GM12878 (cell line): ENCODE measurements at regions of chr12 and their contacts with region 1.

Region 1: GRCh38 chr12:1117970-1118563 is 127.0 kb downstream of the ERC1 start:
- DNase-seq: no peak
- ATAC-seq: peak; percentile 73
- H3K4me3 ChIP-seq: no peak overlapping the region
- H3K27ac ChIP-seq: no peak overlapping the region
- H3K4me1 ChIP-seq: peaks cover 4% of the 10 kb centered on the region; the same call in 1 of the 2 replicates
- H3K27me3 ChIP-seq: no peaks in the 10 kb centered on the region
- CTCF ChIP-seq: peak; percentile 80 to 87 (median 83)
- EP300 ChIP-seq: no peak
- POLR2A ChIP-seq: no peak
- RAD21 ChIP-seq: peak; percentile 97

Region 2: GRCh38 chr12:569803-570434 is 548.1 kb before region 1 on chr12:
- CTCF ChIA-PET with region 1: interaction called, 10 read pairs
- POLR2A ChIA-PET with region 1: no interaction called
- RAD21 ChIA-PET with region 1: interaction called, 3 read pairs
- SMC1A ChIA-PET with region 1: no interaction called
- in situ Hi-C with region 1: no loop called
- intact Hi-C with region 1: no loop called
- DNase-seq: no peak
- ATAC-seq: peak; percentile 97
- H3K4me3 ChIP-seq: peak overlapping the region; percentile 64
- H3K27ac ChIP-seq: no peak overlapping the region
- H3K4me1 ChIP-seq: no peaks in the 10 kb centered on the region
- H3K27me3 ChIP-seq: no peaks in the 10 kb centered on the region
- CTCF ChIP-seq: peak; percentile 91 to 94 (median 92)
- EP300 ChIP-seq: no peak
- POLR2A ChIP-seq: no peak
- RAD21 ChIP-seq: peak; percentile 92

Region 3: DNA sequence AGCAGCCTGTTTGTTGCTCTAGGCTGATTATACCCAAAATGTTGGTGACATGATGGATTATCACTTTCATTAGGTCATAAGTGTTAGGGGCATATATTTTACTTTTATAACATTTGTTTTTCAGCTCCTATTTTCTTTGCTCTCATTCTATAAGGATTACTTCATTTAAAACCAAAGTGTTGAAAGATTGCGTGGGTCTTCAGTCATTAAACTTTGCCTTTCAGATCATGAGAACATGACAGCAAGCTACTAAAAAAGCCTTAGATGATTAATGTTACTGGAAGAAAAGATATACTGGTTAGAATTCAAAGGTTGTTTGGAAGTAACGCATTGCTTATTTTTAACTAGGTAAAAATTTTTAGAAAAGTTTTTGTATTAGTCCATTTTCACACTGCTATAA is 29.8 kb after region 1 on chr12:
- CTCF ChIA-PET with region 1: interaction called, 15 read pairs
- POLR2A ChIA-PET with region 1: no interaction called
- RAD21 ChIA-PET with region 1: interaction called, 6 read pairs
- SMC1A ChIA-PET with region 1: interaction called, 15 read pairs
- in situ Hi-C with region 1: no loop called
- intact Hi-C with region 1: no loop called
- DNase-seq: no peak
- ATAC-seq: no peak
- H3K4me3 ChIP-seq: no peak overlapping the region
- H3K27ac ChIP-seq: no peak overlapping the region
- H3K4me1 ChIP-seq: no peaks in the 10 kb centered on the region
- H3K27me3 ChIP-seq: no peaks in the 10 kb centered on the region
- CTCF ChIP-seq: no peak
- EP300 ChIP-seq: no peak
- POLR2A ChIP-seq: no peak
- RAD21 ChIP-seq: no peak

Region 4: GRCh38 chr12:1250641-1251040 is 132.6 kb after region 1 on chr12:
- CTCF ChIA-PET with region 1: interaction called, 12 read pairs
- POLR2A ChIA-PET with region 1: no interaction called
- RAD21 ChIA-PET with region 1: interaction called, 8 read pairs
- SMC1A ChIA-PET with region 1: interaction called, 4 read pairs
- in situ Hi-C with region 1: no loop called
- intact Hi-C with region 1: no loop called
- DNase-seq: no peak
- ATAC-seq: no peak
- H3K4me3 ChIP-seq: no peak overlapping the region
- H3K27ac ChIP-seq: no peak overlapping the region
- H3K4me1 ChIP-seq: no peaks in the 10 kb centered on the region
- H3K27me3 ChIP-seq: no peaks in the 10 kb centered on the region
- CTCF ChIP-seq: no peak
- EP300 ChIP-seq: no peak
- POLR2A ChIP-seq: no peak
- RAD21 ChIP-seq: no peak

Region 5: DNA sequence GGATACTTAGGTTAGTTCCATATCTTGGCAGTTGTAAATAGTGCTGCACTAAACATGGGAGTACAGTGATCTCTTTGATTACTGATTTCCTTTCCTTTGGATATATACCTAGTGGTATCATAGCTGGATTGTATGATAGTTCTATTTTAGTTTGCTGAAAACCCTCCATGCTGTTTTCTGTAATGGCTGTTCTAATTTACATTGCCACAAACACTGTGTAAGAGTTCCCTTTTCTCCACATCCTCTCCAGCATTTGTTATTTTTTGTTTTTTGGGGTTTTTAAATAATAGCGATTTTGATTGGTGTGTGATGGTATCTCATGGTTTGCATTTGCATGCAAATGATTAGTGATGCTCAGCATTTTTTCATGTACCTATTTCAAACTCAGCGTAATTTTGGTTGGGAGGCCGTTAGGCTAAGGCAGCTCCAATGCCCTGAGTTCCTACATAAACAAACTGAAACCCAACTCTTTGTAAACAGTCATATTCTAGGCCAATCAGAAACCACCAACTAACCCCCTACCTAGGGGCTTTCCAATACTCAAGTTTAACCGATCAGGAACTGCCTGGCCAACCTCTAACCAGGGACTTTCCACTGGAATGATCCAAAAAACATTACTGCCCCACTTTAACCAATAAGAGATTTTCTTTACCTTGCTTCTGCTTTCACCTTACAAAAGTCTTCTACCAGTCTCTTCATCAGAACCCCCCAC is 304.7 kb after region 1 on chr12:
- CTCF ChIA-PET with region 1: interaction called, 5 read pairs
- POLR2A ChIA-PET with region 1: no interaction called
- RAD21 ChIA-PET with region 1: interaction called, 4 read pairs
- SMC1A ChIA-PET with region 1: interaction called, 10 read pairs
- in situ Hi-C with region 1: no loop called
- intact Hi-C with region 1: no loop called
- DNase-seq: peak; percentile 83
- ATAC-seq: peak; percentile 98
- H3K4me3 ChIP-seq: no peak overlapping the region
- H3K27ac ChIP-seq: peak overlapping the region; percentile 75
- H3K4me1 ChIP-seq: no peaks in the 10 kb centered on the region
- H3K27me3 ChIP-seq: no peaks in the 10 kb centered on the region
- CTCF ChIP-seq: no peak
- EP300 ChIP-seq: peak; percentile 46 to 57; a peak in 3 of 4 replicates
- POLR2A ChIP-seq: no peak
- RAD21 ChIP-seq: no peak

Region 6: GRCh38 chr12:1544996-1545700 is 427.1 kb after region 1 on chr12:
- CTCF ChIA-PET with region 1: interaction called, 14 read pairs
- POLR2A ChIA-PET with region 1: no interaction called
- RAD21 ChIA-PET with region 1: no interaction called
- SMC1A ChIA-PET with region 1: interaction called, 4 read pairs
- in situ Hi-C with region 1: no loop called
- intact Hi-C with region 1: no loop called
- DNase-seq: no peak
- ATAC-seq: no peak
- H3K4me3 ChIP-seq: no peak overlapping the region
- H3K27ac ChIP-seq: no peak overlapping the region
- H3K4me1 ChIP-seq: peaks cover 15% of the 10 kb centered on the region; the same call in 1 of the 2 replicates
- H3K27me3 ChIP-seq: no peaks in the 10 kb centered on the region
- CTCF ChIP-seq: peak in 1 of 3 experiments; percentile 11; a peak in 1 of 6 replicates
- EP300 ChIP-seq: no peak
- POLR2A ChIP-seq: no peak
- RAD21 ChIP-seq: peak; percentile 30; the same call in 1 of the 2 replicates

Region 7: DNA sequence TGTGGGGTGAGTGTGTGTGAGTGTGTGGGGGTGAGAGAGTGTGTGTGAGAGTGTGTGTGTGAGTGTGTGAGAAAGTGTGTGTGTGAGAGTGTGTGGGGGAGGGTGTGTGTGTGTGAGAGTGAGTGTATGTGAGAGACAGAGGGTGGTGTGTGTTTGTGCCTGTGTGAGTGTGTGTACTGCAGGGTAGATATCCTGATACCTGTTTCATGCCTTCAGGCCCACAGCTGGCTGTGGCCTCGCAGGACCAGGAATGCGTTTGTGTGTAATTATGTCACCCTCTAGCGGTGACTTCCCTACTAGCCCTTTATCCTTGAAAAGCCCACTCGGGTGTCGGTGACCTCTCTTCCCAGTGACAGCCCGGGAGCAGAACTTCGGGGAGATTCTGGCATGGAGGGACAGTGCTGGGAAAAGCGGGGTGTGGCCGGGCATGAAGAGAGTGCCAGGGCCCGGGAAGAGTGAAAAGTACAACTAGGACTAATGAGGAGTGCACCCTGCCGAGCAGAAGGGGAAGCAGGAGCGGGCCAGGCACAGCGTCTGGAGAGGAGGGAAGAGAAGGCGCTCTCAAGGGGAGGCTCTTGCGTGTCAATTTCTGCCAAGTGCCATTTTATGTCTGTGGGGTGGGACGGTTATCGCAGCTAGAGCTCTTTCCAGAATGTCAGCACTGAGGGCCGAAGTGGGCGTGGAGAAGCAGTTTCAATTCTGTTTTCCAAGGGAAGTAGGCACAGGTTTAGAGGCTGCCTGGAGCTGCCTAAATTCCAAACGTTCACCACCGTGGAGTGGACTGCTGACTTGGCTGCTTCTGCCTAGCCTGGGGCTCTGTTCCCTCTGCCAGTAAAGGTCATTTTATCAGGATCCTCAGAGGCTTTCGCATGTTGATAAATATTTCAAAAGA is 487.3 kb after region 1 on chr12:
- CTCF ChIA-PET with region 1: interaction called, 79 read pairs
- POLR2A ChIA-PET with region 1: interaction called, 4 read pairs
- RAD21 ChIA-PET with region 1: interaction called, 68 read pairs
- SMC1A ChIA-PET with region 1: interaction called, 72 read pairs
- in situ Hi-C with region 1: no loop called
- intact Hi-C with region 1: no loop called
- DNase-seq: no peak
- ATAC-seq: peak; percentile 73
- H3K4me3 ChIP-seq: peak overlapping the region; percentile 61; the same call in 1 of the 2 replicates
- H3K27ac ChIP-seq: peak overlapping the region; percentile 79
- H3K4me1 ChIP-seq: peaks cover 48% of the 10 kb centered on the region
- H3K27me3 ChIP-seq: no peaks in the 10 kb centered on the region
- CTCF ChIP-seq: peak; percentile 75 to 93 (median 79)
- EP300 ChIP-seq: no peak
- POLR2A ChIP-seq: no peak; the same call in 1 of the 2 replicates
- RAD21 ChIP-seq: peak; percentile 75